Ascending aorta (tissue), 2 donors: ENCODE measurements at regions of chr1 and their contacts with region 1.

Region 1: DNA sequence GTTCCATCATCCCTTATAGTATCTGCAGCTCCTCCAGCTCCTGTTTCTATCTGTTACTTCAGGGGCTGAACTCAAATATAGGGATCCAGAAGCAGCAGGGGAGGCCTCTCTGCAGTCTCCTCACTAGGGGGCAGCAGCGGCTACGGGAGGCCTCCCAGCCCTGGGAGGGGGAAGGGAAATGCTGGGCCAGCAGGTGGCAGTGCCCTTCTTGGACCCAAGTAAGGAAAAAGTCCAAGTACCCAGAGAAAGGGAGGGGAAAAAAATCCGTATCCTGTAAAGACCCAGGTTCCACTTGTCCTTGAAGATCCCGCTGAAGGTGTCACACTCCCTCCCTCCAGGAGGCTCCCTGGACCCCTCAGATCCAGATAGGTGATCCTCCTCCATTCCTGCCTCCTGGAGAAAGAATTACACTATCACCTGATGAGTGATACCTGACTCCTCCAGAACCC is 14.1 kb upstream of the NUAK2 start:
- DNase-seq: peak in 1 of 2 donors; percentile 82
- H3K4me3 ChIP-seq: no peak overlapping the region
- H3K27ac ChIP-seq: no peak overlapping the region
- H3K4me1 ChIP-seq: no peaks in the 10 kb centered on the region
- H3K27me3 ChIP-seq: no peaks in the 10 kb centered on the region
- CTCF ChIP-seq: peak; percentile 87 to 97 (median 93)

Region 2: DNA sequence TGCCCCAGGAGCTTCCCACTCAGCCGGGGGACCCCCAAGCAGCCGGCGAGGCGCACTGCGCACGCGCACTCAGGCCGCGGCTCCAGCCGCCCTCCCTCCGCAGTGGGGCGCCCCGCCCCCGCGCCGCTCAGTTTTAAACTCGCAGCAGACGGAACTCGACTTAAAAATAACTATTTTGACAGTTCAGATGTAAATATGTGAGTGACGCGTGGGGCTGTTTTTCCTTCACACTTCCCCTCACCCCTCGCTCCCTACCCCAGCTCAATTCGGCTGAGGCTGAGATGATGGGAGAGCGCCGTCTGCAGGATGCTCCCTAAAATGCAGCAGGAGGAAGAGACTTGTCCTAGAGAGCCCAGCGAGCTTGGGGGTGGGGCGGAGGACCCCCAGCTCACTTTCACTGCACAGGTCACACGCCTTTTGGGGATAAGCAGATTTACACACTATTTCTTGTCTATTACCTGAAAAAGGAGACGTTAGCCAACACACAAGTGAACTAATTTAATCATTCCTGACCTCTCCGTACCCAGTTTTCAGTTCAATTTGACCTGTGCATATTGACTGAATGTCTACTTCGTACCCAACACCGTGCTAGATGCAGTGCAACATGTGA is 95.1 kb after region 1 on chr1:
- intact Hi-C with region 1: loop called (anchors 5 kb)
- DNase-seq: peak in 1 of 2 donors; percentile 70
- H3K4me3 ChIP-seq: peak overlapping the region; percentile 38 to 73
- H3K27ac ChIP-seq: no peak overlapping the region
- H3K4me1 ChIP-seq: peaks cover 0 to 4% of the 10 kb centered on the region in 2 donors
- H3K27me3 ChIP-seq: no peaks in the 10 kb centered on the region
- CTCF ChIP-seq: peak; percentile 75 to 93 (median 82)

Region 3: DNA sequence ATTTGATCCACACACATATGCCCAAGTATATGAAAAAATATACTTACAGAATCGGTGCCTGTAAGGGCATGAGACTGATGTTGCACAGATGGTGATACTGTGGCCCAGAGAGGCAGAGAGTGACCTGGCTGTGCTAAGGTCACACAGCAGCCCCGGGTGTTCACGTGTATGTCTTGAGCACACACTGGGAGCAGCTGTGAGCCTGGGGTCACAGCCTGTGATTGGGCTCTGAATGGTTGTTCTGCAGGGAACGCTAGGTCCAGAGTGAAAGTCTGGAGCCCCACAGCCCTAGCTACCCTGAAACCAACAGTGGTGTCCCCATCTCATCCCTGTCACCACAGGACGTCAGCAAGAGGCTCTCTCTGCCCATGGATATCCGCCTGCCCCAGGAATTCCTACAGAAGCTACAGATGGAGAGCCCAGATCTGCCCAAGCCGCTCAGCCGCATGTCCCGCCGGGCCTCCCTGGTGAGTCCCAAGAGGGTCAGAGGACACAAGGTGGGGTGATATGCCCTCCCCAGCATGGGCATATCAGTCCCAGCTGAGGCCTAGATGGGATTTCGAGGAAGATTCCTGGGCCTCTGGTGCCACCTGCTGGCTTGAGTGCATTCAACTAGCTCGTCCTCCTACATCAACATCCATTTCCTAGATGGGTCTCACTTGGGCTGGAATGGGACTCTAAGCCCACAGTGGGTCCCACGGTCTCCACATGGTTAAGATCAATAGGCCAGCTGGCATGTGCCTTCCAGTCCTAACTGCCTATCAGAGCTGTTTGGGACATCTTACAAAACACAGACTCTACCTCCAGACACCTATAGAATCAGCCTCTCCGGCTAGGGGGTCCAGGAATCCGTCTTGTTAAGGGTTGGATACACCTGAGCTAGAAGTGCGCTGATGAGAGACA is 188.5 kb after region 1 on chr1:
- intact Hi-C with region 1: loop called (anchors 1 kb)
- DNase-seq: peak in 1 of 2 donors; percentile 79
- H3K4me3 ChIP-seq: no peak overlapping the region
- H3K27ac ChIP-seq: no peak overlapping the region
- H3K4me1 ChIP-seq: peaks cover under 1 to 5% of the 10 kb centered on the region in 2 donors
- H3K27me3 ChIP-seq: no peaks in the 10 kb centered on the region
- CTCF ChIP-seq: peak; percentile 61 to 78 (median 72)